Motor neuron (in vitro differentiated cells): ENCODE measurements at regions of chr14 and their contacts with region 1.

Region 1: DNA sequence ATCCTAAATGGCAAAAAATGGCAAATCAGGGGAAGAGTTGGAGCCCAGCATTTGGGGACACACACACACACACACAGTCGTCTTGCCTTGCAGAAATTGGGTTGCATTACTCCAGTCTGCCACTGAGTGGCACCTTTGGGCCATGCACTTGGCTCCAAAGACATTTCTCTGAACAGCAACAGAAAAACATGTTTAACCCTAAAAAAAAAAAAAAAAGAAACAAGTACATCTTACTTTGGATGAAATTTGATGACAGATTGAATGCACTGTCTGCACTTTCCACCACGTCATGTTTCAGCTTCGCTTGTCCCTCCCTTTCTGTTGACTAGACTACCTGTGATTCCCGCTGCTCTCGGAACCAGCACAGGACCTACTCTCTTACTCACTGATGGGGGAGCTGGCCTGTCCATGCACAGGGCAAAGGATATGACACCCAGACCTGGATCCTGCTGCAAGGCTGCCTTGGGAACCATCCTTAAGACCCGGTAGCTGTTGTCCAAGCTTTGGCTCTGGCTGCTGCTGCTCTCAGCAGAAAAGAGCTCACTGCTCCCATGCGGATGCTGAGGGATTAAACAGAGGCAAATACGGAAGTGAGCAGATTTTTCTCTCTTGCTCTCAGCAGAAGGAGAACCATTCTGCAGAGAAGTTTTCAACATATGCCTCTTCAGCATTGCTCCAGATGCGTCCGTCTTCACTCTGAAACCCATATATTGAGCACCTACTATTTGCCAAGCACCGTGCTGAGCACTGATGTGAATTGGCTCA is 376.8 kb downstream of the DPF3 start:
- ATAC-seq: peak; percentile 76 to 88 (median 82)
- H3K4me3 ChIP-seq: no peak overlapping the region
- H3K27ac ChIP-seq: no peak overlapping the region
- H3K4me1 ChIP-seq: peaks cover 0 to 18% of the 10 kb centered on the region in 2 donors

Region 2: GRCh38 chr14:72893636-72894321 is 376.7 kb after region 1 on chr14 and contains the start of gene DPF3:
- in situ Hi-C with region 1: loop called in 3 of 9 experiments (anchors 10 to 25 kb)
- ATAC-seq: peak; percentile 89 to 95 (median 93)
- H3K4me3 ChIP-seq: peak within 1 kb of the TSS; percentile 51 to 76 (median 60)
- H3K27ac ChIP-seq: no peak within 1 kb of the TSS
- H3K4me1 ChIP-seq: peaks cover 15 to 19% of the 10 kb centered on the region in 2 donors
- total RNA-seq, gene DPF3: 5.0 to 10.8 (median 8.6) TPM

Region 3: DNA sequence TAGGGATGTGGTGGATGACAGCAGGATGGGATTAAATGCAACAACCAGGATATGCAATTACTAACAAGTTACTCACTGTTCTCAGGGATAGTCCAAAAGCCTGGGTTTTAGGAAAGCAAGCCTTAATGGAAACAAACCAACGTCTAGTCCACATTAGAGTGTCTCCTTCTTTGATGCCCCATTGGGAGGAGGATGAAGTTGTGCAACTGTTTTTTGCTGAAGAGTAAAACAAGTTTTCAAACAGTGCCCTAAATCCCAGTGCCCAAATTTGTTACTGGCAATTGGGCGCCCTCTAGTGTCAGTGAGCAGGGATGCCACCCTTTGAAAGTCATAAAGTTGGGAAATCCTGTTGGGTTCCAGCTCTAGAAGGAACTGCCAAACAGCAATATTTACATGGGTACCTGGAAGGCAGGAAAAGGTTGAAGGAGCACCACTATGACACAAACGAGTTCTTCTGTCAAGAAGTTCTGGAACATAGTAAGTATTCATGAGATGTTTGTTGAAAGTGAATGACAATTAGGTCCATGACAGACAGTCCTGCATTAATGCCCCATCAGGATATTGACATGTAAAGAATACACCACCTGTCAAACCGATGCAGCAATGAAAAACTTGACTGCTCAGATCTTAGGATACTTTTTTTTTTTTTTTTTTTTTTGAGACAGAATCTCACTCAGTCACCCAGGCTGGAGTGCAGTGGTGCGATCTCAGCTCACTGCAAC is 387.9 kb after region 1 on chr14:
- in situ Hi-C with region 1: loop called in 5 of 9 experiments (anchors 5 to 25 kb)
- ATAC-seq: peak; percentile 21 to 61 (median 54)
- H3K4me3 ChIP-seq: no peak overlapping the region
- H3K27ac ChIP-seq: no peak overlapping the region
- H3K4me1 ChIP-seq: no peaks in the 10 kb centered on the region

Region 4: DNA sequence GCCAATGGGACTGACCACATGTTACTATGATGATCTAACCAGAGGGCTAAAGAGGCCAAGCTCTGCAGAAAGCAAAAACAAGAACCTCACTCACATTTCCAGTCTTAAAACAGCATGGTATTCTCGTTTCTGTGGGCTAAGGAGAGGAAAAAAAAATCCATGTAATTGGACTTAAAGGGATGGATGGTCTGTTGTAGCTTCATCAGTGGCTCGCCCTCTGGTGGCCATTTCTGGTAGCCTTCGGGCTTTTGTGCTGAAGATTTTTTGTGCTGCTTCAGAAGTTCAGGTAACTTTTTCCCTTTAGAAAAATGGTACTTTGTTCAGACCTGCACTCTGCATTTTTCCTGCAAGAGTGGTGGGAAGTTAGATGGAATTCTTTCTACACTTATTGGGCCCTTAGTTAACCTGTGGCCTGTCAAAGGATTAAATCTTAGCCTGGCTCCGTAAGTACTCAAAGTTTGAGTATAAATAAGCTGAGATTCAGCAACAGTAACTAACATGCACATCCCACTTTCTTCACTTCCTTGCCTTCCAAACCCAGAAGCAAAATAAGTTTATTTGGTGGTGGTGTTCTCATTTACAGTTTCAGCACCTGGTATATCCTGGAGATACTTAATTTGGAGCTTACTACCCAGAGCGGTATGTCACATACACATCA is 431.5 kb after region 1 on chr14:
- in situ Hi-C with region 1: loop called in 1 of 9 experiments (anchors 10 kb)
- ATAC-seq: peak in 7 of 8 experiments; percentile 30 to 81 (median 57)
- H3K4me3 ChIP-seq: no peak overlapping the region
- H3K27ac ChIP-seq: no peak overlapping the region
- H3K4me1 ChIP-seq: no peaks in the 10 kb centered on the region